ENCODE measurements at regions of chr9 and their contacts with region 1.

Region 1: GRCh38 chr9:19161257-19162025 is 34.1 kb upstream of the PLIN2 start:
- DNase-seq: peak; percentile 96
- H3K4me3 Mint-ChIP-seq: peak overlapping the region; percentile 11
- H3K27ac Mint-ChIP-seq: peak overlapping the region; percentile 94
- H3K4me1 Mint-ChIP-seq: peaks cover 17% of the 10 kb centered on the region
- H3K27me3 Mint-ChIP-seq: no peaks in the 10 kb centered on the region
- CTCF ChIP-seq: no peak

Region 2: GRCh38 chr9:18996201-18996600 is 165.2 kb before region 1 on chr9:
- CTCF ChIA-PET with region 1: no interaction called
- POLR2A ChIA-PET with region 1: no interaction called
- intact Hi-C with region 1: no loop called
- DNase-seq: peak; percentile 24
- H3K4me3 Mint-ChIP-seq: no peak overlapping the region
- H3K27ac Mint-ChIP-seq: no peak overlapping the region
- H3K4me1 Mint-ChIP-seq: no peaks in the 10 kb centered on the region
- H3K27me3 Mint-ChIP-seq: no peaks in the 10 kb centered on the region
- CTCF ChIP-seq: no peak

Region 3: GRCh38 chr9:19074836-19075235 is 86.6 kb before region 1 on chr9:
- CTCF ChIA-PET with region 1: no interaction called
- POLR2A ChIA-PET with region 1: no interaction called
- intact Hi-C with region 1: no loop called
- DNase-seq: peak; percentile 33
- H3K4me3 Mint-ChIP-seq: no peak overlapping the region
- H3K27ac Mint-ChIP-seq: no peak overlapping the region
- H3K4me1 Mint-ChIP-seq: peaks cover 9% of the 10 kb centered on the region
- H3K27me3 Mint-ChIP-seq: no peaks in the 10 kb centered on the region
- CTCF ChIP-seq: no peak

Region 4: DNA sequence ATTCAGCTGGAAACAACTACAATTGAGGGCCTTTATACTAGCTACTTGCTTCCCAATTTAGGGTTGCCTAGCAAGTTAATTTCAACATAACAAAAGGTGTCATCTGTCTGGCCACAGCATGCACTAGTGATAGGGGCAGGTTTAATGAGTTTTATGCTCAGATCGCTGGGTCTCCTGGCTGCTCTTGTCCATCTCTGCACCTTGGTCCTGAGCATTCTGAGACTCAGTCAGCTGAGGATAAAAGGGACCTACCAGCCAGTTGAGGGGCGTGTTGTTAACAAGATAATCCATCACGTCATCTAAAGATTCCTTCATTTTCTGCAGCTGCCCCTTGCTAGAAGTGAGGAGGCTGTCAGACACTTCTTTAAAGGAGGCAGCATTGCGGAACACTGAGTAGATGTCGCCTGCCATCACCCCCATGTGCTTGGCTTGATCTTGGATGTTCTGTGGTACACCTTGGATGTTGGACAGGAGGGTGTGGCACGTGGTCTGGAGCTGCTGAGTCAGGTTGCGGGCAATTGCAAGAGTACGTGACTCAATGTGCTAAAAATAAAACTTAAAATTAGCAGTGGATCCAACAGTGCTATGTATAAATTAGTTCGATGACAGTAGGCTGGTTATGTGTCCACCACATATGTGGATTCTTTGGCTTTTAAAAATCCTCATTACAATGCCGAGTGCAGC is 45.2 kb before region 1 on chr9:
- CTCF ChIA-PET with region 1: no interaction called
- POLR2A ChIA-PET with region 1: interaction called, 15 read pairs
- intact Hi-C with region 1: loop called (anchors 5 kb)
- DNase-seq: peak; percentile 82
- H3K4me3 Mint-ChIP-seq: peak overlapping the region; percentile 16
- H3K27ac Mint-ChIP-seq: no peak overlapping the region
- H3K4me1 Mint-ChIP-seq: peaks cover 18% of the 10 kb centered on the region
- H3K27me3 Mint-ChIP-seq: no peaks in the 10 kb centered on the region
- CTCF ChIP-seq: no peak

Region 5: GRCh38 chr9:19137282-19137681 is 24.2 kb before region 1 on chr9:
- CTCF ChIA-PET with region 1: no interaction called
- POLR2A ChIA-PET with region 1: no interaction called
- intact Hi-C with region 1: no loop called
- DNase-seq: no peak
- H3K4me3 Mint-ChIP-seq: no peak overlapping the region
- H3K27ac Mint-ChIP-seq: no peak overlapping the region
- H3K4me1 Mint-ChIP-seq: peaks cover 3% of the 10 kb centered on the region
- H3K27me3 Mint-ChIP-seq: no peaks in the 10 kb centered on the region
- CTCF ChIP-seq: no peak

Region 6: DNA sequence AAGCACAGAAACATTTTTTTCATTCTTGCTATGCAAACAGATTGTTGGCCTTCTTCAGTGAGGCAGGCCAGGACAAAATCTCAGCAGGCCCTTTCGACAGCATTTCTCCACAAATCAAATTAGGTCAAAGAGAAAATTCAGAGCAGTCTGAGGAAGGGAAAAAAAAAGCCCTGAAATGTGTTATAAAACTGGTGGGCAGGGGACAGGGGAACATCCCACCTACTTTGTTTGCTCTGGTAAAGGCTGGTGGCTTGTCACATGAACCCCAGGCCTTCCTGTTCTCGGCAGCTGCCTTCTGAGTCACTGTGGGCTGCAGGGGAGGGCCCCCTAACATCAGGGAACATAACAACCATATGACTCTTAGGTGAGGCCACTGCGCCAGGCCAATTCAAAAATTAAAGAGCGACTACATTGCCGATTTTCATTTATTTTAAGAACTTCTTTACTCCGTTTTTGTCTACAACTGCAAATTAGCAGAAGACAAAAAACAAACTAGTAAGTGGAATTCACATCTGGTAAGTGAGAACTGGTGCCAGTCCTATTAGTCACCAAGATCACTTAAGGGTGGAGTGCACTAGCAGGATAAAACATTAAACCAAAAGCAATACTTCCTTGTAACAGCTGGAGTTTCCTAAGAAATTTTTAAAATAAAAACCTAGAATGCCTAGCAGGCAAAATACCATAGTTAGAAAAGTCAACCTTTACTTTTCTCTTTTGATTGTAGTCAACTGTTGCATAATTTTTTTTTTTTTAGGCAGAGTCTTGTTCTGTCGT is 22.9 kb after region 1 on chr9:
- CTCF ChIA-PET with region 1: interaction called, 3 read pairs
- POLR2A ChIA-PET with region 1: interaction called, 20 read pairs
- intact Hi-C with region 1: loop called (anchors 2 kb)
- DNase-seq: peak; percentile 74
- H3K4me3 Mint-ChIP-seq: peak overlapping the region; percentile 38
- H3K27ac Mint-ChIP-seq: peak overlapping the region; percentile 98
- H3K4me1 Mint-ChIP-seq: peaks cover 13% of the 10 kb centered on the region
- H3K27me3 Mint-ChIP-seq: no peaks in the 10 kb centered on the region
- CTCF ChIP-seq: no peak